HepG2 (cell line): ENCODE measurements at regions of chr17 and their contacts with region 1.

Region 1: DNA sequence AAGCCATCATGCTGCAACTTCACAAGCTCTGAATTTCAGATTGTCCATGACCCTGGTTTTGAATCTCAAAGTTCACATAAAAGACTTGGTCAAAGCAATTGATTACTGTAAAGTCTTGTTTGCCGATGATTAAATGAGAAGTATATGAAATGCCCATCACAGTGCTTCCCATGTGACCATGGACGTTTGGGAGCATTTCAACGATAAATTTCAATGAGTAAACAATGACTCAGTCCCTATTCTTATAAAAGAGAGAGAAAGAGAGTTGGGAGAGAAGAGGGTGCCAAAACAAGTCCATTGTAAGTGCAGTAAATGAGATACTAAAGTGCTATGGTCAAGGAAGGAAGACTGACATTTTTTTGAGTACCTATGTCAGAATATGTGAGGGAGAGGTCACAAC is 276.9 kb downstream of the SOX9 start:
- DNase-seq: no peak
- ATAC-seq: no peak
- H3K4me3 ChIP-seq: no peak overlapping the region
- H3K27ac ChIP-seq: peak overlapping the region; percentile 41
- H3K4me1 ChIP-seq: peaks cover 98% of the 10 kb centered on the region
- H3K27me3 ChIP-seq: no peaks in the 10 kb centered on the region
- CTCF ChIP-seq: no peak
- EP300 ChIP-seq: no peak
- POLR2A ChIP-seq: no peak
- RAD21 ChIP-seq: no peak

Region 2: DNA sequence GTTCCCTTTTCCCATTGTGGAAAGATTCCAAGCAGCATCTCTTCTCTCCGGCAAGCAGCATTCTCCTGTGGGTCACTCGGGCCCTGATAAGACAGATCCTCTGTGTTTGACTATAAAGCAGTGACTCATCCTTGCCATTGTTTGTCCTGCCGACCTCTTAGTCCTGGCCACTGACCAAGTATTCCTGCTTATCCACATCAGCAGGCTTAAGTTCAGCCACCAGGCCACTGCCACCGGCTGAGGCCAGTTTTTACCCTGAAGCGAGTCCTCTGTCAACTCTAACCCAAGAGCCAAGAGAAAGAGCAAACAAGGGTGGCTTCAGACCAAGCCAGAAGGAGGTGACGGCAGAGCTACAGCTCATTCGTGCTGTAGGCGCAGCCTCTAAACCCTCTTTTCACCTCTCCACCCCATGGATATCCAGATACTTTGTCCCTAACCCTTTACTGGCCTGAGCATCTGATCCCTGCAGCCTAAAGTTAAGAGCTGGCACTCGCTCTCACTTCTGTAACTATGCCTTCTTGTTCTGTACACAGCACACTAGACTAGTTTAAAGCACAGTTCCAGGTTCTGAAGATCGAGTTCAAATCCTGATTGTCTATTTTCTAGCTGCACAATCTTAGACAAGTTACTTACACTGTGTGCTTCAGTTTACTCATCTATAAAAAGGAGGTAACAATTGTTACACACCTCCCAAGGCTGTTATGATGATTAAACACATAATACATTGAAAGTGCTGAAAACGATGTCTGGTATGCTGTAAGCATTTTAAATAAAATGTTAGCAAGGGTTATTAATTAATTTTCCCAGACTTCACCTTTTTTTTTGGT is 245.9 kb before region 1 on chr17:
- CTCF ChIA-PET with region 1: no interaction called
- POLR2A ChIA-PET with region 1: no interaction called
- in situ Hi-C with region 1: no loop called
- intact Hi-C with region 1: loop called (anchors 1 kb)
- DNase-seq: peak; percentile 97
- ATAC-seq: peak; percentile 99
- H3K4me3 ChIP-seq: peak overlapping the region in 1 of 3 experiments; percentile 41; a peak in 2 of 6 replicates
- H3K27ac ChIP-seq: peak overlapping the region; percentile 14
- H3K4me1 ChIP-seq: peaks cover 29% of the 10 kb centered on the region
- H3K27me3 ChIP-seq: peaks cover 0 to 6% of the 10 kb centered on the region in 2 experiments; a peak in 1 of 5 replicates
- CTCF ChIP-seq: peak; percentile 27
- EP300 ChIP-seq: peak; percentile 58 to 66
- POLR2A ChIP-seq: no peak
- RAD21 ChIP-seq: peak; percentile 40; the same call in 1 of the 2 replicates

Region 3: GRCh38 chr17:72338847-72339790 is 58.6 kb before region 1 on chr17:
- CTCF ChIA-PET with region 1: no interaction called
- POLR2A ChIA-PET with region 1: interaction called, 35 read pairs
- in situ Hi-C with region 1: loop called (anchors 5 kb)
- intact Hi-C with region 1: loop called (anchors 1 kb)
- DNase-seq: peak; percentile 97
- ATAC-seq: peak; percentile 93
- H3K4me3 ChIP-seq: peak overlapping the region in 1 of 3 experiments; percentile 40; a peak in 2 of 6 replicates
- H3K27ac ChIP-seq: peak overlapping the region; percentile 81
- H3K4me1 ChIP-seq: peaks cover 55% of the 10 kb centered on the region
- H3K27me3 ChIP-seq: no peaks in the 10 kb centered on the region
- CTCF ChIP-seq: no peak
- EP300 ChIP-seq: peak; percentile 58 to 79
- POLR2A ChIP-seq: peak; percentile 17 to 30; a peak in 1 of 4 replicates
- RAD21 ChIP-seq: no peak

Region 4: DNA sequence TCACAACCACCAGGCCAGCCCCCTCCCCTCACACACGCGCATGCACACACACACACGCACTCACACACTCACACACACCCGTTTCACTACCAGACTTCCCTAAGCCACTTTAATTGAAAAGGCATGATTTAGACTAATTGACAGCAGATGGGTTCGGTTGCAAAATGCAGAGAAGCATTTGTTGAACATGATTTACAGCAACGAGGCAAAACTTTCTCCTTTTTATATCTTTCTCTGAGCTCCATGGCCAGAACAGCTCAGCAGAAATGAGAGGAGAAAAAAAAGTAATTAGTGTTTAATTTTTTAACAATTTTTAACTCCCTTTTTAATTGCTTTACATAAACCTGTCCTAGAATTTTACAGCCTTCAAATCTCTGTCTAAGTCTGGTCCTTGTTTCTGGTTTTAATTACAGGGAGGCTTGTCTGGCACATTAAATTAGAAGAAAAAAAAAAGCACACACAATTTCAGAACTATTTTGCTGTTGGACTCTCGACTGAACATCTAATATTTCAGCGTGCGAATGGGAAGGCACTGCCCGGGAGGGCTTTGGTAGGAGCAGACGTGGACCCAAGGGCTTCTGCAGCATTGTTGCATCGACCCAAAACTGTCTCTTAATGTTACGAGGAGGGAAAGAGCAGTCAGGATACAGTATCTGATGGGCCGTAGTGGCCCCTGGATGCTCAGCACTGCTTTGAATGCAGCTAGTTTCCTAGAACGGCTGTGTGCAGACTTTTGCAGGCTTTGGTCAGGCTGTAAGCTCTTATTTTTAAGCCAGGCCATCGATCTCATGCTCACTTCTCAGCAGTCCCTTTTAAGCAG is 21.0 kb before region 1 on chr17:
- CTCF ChIA-PET with region 1: no interaction called
- POLR2A ChIA-PET with region 1: no interaction called
- in situ Hi-C with region 1: no loop called
- intact Hi-C with region 1: no loop called
- DNase-seq: no peak
- ATAC-seq: no peak
- H3K4me3 ChIP-seq: no peak overlapping the region
- H3K27ac ChIP-seq: no peak overlapping the region
- H3K4me1 ChIP-seq: no peaks in the 10 kb centered on the region
- H3K27me3 ChIP-seq: no peaks in the 10 kb centered on the region
- CTCF ChIP-seq: no peak
- EP300 ChIP-seq: no peak
- POLR2A ChIP-seq: no peak
- RAD21 ChIP-seq: no peak

Region 5: DNA sequence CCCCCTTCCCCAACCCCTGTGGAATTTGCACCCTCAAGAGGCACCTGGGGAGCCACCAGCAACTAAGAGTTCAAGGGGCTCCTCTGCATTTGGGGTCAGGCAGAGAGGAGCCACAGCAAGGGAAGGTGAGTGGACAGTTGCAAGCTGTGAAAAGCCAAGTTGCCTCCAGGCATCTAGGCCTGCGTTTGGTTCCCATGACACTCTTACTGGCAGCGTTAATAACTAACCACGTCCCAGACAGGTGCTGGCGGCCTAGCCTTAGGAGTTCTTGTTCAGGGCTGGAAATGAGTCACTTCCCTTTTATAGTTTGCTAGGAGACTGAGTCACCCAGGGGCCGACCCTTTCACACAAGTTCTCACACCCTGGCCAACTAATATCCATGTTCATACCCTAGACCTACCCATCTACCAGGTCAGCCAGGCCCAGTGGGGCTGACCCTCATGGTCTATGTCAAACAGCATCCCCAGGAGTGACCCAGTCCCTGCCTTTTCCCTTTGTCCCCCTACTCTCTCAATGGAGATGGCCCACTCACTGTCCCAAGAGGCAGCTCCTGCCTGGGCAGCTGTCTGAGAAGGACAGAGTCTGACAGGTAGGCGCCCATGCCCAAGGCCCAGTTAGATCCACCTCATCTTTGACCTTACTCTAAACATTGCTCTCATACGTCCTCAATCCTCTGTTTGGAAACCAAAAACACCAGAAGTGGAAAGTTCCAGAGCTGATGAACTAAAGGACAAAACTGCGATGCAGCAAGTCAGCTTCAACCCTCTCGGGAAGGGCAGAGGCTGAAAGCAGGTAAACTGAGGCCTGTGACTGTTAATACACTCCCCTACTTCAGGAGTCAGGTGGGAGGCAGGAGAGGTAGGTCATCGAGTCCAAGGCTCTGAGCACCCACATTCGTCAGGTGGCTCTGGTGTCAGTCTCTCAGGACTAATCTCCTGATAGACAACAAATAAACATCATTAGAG is 23.7 kb after region 1 on chr17:
- CTCF ChIA-PET with region 1: no interaction called
- POLR2A ChIA-PET with region 1: interaction called, 169 read pairs
- in situ Hi-C with region 1: no loop called
- intact Hi-C with region 1: no loop called
- DNase-seq: peak; percentile 99
- ATAC-seq: peak; percentile 91
- H3K4me3 ChIP-seq: peak overlapping the region in 1 of 3 experiments; percentile 31; a peak in 2 of 6 replicates
- H3K27ac ChIP-seq: peak overlapping the region; percentile 83
- H3K4me1 ChIP-seq: peaks cover 86% of the 10 kb centered on the region
- H3K27me3 ChIP-seq: no peaks in the 10 kb centered on the region
- CTCF ChIP-seq: no peak
- EP300 ChIP-seq: peak in 1 of 2 experiments; percentile 92; a peak in 3 of 4 replicates
- POLR2A ChIP-seq: peak; percentile 48 to 68
- RAD21 ChIP-seq: peak; percentile 34

Region 6: DNA sequence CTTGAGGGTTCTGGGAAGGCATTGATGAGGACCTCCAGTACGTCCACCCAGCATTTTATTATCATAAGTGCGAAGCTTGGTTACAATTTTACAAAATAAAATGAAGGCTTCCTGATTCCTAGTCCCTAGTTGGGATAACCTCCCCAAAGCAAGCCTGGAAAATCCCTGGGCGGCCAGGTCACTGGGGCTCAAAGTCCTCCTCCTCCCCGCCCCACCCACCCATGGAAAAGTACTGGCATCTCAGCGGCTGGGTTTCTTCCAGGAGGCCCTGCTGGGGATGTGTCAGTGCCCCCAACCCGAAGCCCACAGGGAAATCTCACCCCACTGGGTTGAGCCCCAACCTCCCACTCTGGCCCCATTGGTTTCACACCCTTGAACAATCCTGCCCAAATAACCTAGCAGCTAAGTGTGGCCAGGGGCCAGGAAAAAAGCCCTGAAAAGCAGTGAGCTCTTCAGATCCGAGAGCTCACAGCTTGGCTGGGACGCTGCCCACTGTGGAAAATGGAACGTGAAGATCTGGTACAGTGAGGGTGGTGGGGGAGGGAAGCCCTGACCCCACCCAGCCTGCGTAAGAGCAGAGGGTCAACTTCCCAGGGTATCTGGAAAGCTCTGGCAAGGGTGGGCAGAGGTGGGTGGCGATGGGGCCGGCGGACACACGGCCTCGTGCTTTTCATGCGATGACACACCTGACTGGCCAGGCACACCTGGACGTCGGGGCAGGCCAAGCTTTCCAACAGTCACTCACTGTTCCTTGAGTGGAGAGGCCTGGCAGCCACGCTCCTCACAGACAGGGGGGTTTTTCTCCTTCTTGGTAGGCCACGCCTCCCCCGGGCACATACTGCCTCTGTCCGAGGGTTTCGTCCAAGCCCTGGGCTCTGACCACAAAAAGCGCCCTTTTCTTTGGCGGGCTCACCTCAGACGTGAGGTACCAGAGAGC is 47.6 kb after region 1 on chr17:
- CTCF ChIA-PET with region 1: no interaction called
- POLR2A ChIA-PET with region 1: interaction called, 15 read pairs
- in situ Hi-C with region 1: no loop called
- intact Hi-C with region 1: loop called (anchors 1 kb)
- DNase-seq: peak; percentile 84
- ATAC-seq: peak; percentile 55
- H3K4me3 ChIP-seq: peak overlapping the region in 1 of 3 experiments; percentile 48; a peak in 2 of 6 replicates
- H3K27ac ChIP-seq: peak overlapping the region; percentile 96
- H3K4me1 ChIP-seq: peaks cover 97% of the 10 kb centered on the region
- H3K27me3 ChIP-seq: no peaks in the 10 kb centered on the region
- CTCF ChIP-seq: no peak; the same call in 1 of the 2 replicates
- EP300 ChIP-seq: peak in 1 of 2 experiments; percentile 92; a peak in 2 of 4 replicates
- POLR2A ChIP-seq: peak in 1 of 2 experiments; percentile 16; a peak in 1 of 4 replicates
- RAD21 ChIP-seq: no peak

Region 7: DNA sequence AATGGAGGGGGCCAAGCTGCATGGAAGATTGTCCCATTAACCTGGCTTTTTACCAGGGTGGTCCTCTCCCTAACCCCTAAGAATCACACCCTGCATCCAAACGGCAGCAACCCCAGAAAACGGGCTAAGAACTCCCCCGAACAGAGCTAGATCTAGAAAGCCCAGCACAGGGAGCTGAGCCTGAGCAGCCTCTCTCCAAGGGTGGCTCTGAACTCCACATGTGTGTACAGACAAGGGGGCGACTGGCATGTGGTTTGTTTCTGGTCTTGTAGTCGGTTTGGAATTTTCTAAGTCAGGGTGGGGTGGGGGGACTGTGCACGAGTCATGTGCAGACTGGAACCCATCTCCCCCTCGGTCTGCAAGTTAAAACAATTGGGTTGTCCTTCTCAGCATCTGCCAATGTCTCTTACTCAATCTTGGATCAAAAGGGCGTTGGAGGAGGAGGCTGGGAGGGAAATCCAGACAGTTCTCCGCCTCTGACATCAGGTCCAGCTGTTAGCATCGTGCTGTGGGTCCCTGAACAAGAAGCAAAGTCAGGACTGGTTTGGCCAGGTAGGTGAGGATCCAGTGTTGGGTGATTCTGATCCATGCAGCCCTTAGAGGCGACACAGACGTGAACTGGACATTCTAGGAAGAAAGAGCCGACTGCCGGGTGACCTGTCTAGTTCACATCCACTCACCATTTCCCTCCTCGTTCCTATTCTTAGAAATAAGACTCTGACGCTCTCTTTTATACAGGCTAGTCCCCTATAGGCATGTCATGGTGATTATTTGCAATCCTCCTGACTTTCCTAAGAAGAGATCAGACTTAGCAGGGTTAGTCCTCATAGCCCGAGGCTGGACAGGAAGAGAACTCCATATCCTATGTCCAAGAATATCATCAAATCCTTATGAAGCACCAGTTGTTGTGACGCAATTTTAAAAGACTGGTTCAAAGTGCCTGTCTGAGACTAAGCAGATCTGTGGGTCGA is 105.0 kb after region 1 on chr17:
- CTCF ChIA-PET with region 1: no interaction called
- POLR2A ChIA-PET with region 1: interaction called, 20 read pairs
- in situ Hi-C with region 1: no loop called
- intact Hi-C with region 1: loop called (anchors 1 kb)
- DNase-seq: peak; percentile 93
- ATAC-seq: peak; percentile 82
- H3K4me3 ChIP-seq: peak overlapping the region; percentile 60 to 78 (median 60)
- H3K27ac ChIP-seq: peak overlapping the region; percentile 78
- H3K4me1 ChIP-seq: peaks cover 58% of the 10 kb centered on the region
- H3K27me3 ChIP-seq: no peaks in the 10 kb centered on the region
- CTCF ChIP-seq: 0 out of 2 replicates have a peak, but pooled peaks have one; percentile 1
- EP300 ChIP-seq: peak in 1 of 2 experiments; percentile 91; a peak in 2 of 4 replicates
- POLR2A ChIP-seq: no peak
- RAD21 ChIP-seq: no peak

Region 8: GRCh38 chr17:72539981-72540897 is 142.6 kb after region 1 on chr17:
- CTCF ChIA-PET with region 1: no interaction called
- POLR2A ChIA-PET with region 1: interaction called, 14 read pairs
- in situ Hi-C with region 1: no loop called
- intact Hi-C with region 1: loop called (anchors 1 kb)
- DNase-seq: peak; percentile 66
- ATAC-seq: peak; percentile 99
- H3K4me3 ChIP-seq: peak overlapping the region in 1 of 3 experiments; percentile 45; a peak in 3 of 6 replicates
- H3K27ac ChIP-seq: peak overlapping the region; percentile 30
- H3K4me1 ChIP-seq: peaks cover 80% of the 10 kb centered on the region
- H3K27me3 ChIP-seq: no peaks in the 10 kb centered on the region
- CTCF ChIP-seq: peak; percentile 93
- EP300 ChIP-seq: peak in 1 of 2 experiments; percentile 58; a peak in 2 of 4 replicates
- POLR2A ChIP-seq: no peak
- RAD21 ChIP-seq: peak; percentile 100